Activated T-helper 2 cell treated with anti-CD3 and anti-CD28 coated beads, Interferon-gamma antibody, Interleukin-2, Interleukin-4, amounts not matched to agents 10 μg/mL and 5 μg/mL and 100 μg/mL, durations not matched to agents 14 hours and 24 hours and 36 hours (primary cell): ENCODE measurements at regions of chr1 and their contacts with region 1.

Region 1: DNA sequence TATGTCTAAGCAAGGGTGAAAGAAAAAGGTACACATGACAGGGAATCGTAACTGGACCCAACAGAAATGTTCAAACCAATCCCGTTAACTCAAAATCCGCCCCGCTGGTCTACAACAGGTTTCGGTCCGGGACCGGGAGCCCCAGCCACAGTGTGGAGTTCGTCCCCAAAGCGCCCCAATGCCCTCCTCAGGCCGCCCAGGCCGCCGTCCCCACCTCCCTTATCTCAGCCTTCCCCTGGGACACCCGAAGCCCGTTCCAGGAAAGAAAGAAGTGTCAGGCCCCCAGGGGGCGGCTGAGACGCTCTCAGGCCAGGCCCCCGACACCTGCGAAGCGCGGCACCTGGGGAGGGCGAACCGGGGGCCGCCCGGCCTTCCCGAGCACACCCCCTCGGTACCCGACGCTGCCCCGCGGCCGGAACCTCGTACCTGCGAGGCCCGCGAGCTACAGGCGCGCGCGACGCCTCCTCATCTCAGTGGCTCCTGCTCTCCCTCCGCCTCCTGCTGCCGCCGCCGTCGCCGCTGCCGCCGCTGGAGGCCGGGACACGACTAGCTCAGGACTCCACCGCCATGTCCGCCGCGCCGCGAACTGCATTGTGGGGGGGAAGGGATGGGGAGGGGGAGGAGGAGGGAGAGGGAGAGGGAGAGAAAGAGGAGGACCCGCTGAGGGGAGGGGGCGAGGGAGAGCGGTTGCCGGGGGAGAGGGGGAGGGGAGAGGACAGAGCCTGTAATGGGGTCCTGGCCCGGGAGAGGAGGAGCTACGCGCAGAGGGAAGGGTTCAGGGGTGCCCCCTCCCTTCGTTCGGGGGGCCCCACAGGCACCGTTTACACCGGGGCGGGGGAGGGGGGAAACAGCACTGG is at the start of gene TUT4:
- DNase-seq: peak; percentile 70
- H3K4me3 Mint-ChIP-seq: peak within 1 kb of the TSS; percentile 72
- H3K27ac Mint-ChIP-seq: no peak within 1 kb of the TSS
- H3K4me1 Mint-ChIP-seq: peaks cover 20% of the 10 kb centered on the region
- H3K27me3 Mint-ChIP-seq: peaks cover 2% of the 10 kb centered on the region
- total RNA-seq, gene TUT4: 61.6 and 63.1 TPM in 2 replicates

Region 2: GRCh38 chr1:52365746-52366516 is 186.8 kb before region 1 on chr1 and contains the start of gene CC2D1B:
- intact Hi-C with region 1: loop called (anchors 1 kb)
- DNase-seq: peak; percentile 100
- H3K4me3 Mint-ChIP-seq: peak within 1 kb of the TSS; percentile 94
- H3K27ac Mint-ChIP-seq: peak within 1 kb of the TSS; percentile 93
- H3K4me1 Mint-ChIP-seq: peaks cover 34% of the 10 kb centered on the region
- H3K27me3 Mint-ChIP-seq: no peaks in the 10 kb centered on the region
- total RNA-seq, gene CC2D1B: 36.0 and 38.1 TPM in 2 replicates

Region 3: DNA sequence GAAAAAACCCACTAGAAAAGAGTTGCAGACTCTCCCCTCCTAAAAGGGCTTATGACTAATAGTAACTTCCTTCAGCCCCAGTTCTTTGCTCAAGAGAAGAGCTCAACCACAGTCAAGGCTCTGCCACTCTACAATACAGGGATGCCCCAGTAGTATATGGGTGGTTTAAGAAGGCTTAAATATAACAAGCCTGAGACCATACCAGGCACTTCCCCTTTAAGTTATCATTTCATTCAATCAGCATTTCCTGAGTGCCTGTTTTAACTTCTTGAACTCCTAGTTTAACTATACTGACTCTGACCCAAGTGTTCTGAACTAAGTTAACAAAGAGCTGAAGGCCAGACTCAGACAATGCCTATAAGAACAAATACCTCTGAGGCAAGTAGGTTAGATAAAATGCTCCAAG is 128.5 kb before region 1 on chr1:
- intact Hi-C with region 1: loop called (anchors 5 kb)
- DNase-seq: peak; percentile 18
- H3K4me3 Mint-ChIP-seq: peak overlapping the region; percentile 54
- H3K27ac Mint-ChIP-seq: peak overlapping the region; percentile 91
- H3K4me1 Mint-ChIP-seq: peaks cover 37% of the 10 kb centered on the region
- H3K27me3 Mint-ChIP-seq: no peaks in the 10 kb centered on the region

Region 4: DNA sequence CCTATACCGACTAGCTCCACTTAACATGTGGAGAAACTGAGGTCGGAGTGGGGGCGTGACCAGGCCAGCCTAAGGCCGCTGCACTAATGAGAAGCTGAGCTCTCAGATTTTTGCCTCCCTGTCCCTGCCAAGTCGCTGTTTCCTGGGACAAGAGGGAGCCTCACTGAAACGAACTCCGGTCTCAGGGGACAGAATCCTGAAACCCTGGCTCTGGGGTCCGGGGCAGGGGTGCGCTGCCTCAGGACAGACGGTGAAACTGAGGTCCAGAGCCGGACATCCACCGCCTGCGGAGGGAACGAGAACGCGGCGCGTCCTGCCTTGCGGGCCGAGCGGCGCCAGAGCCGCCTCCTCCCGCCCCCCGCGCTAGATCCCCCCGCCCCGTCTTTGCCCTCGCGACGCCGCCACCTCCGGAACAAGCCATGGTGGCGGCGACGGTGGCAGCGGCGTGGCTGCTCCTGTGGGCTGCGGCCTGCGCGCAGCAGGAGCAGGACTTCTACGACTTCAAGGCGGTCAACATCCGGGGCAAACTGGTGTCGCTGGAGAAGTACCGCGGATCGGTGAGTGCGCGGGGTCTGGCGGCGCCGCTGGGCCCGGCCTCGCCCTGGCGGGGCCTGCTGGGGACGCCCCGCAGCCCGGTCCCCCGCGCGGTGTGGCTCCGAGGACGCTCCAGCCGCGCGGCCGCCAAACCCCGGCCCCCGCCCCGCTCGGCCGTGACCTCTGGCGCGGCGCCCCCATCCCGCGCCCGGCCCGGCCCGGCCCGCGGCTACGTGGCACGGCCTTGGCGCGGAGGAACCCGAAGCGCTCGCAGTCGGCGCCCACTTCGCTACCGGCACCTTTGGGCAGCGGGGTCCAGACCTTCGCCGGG is 49.5 kb after region 1 on chr1 and contains the start of gene GPX7:
- intact Hi-C with region 1: loop called (anchors 2 kb)
- DNase-seq: peak; percentile 53
- H3K4me3 Mint-ChIP-seq: peak within 1 kb of the TSS; percentile 86
- H3K27ac Mint-ChIP-seq: peak within 1 kb of the TSS; percentile 87
- H3K4me1 Mint-ChIP-seq: peaks cover 22% of the 10 kb centered on the region
- H3K27me3 Mint-ChIP-seq: peaks cover 5% of the 10 kb centered on the region
- total RNA-seq, gene GPX7: 29.9 and 31.1 TPM in 2 replicates

Region 5: DNA sequence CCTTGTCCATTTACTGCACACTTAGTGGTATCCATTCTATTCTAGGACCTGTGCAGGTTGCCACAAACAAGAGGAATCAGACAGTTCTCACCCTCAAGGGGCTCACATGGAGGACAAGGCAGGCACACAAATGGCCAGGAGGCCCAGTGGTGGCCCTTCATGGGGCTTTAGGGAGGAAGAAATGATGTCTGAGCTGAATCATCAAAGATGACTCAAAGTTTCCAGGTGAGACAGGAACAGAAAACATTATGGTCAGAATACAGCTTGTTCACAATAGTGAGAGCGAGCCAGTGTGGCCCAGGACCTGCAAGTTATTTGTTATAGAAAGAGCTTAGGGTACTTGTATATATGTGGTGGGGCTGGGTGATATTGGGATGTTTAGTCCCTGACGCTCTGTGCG is 106.6 kb after region 1 on chr1:
- intact Hi-C with region 1: loop called (anchors 1 kb)
- DNase-seq: no peak
- H3K4me3 Mint-ChIP-seq: no peak overlapping the region
- H3K27ac Mint-ChIP-seq: peak overlapping the region; percentile 86
- H3K4me1 Mint-ChIP-seq: peaks cover 20% of the 10 kb centered on the region
- H3K27me3 Mint-ChIP-seq: no peaks in the 10 kb centered on the region